ENCODE measurements at regions of chr2 and their contacts with region 1.

Region 1: GRCh38 chr2:44244129-44244871 is 31.0 kb upstream of the SLC3A1 start:
- DNase-seq: peak; percentile 68
- ATAC-seq: peak; percentile 75
- H3K4me3 ChIP-seq: no peak overlapping the region
- H3K27ac ChIP-seq: no peak overlapping the region
- H3K4me1 ChIP-seq: no peaks in the 10 kb centered on the region
- H3K27me3 ChIP-seq: no peaks in the 10 kb centered on the region; the same call in 1 of the 2 replicates
- CTCF ChIP-seq: peak; percentile 54
- POLR2A ChIP-seq: no peak
- RAD21 ChIP-seq: peak; percentile 50

Region 2: GRCh38 chr2:44044281-44044720 is 200.0 kb before region 1 on chr2:
- CTCF ChIA-PET with region 1: interaction called, 6 read pairs
- POLR2A ChIA-PET with region 1: no interaction called
- dilution Hi-C with region 1: no loop called
- in situ Hi-C with region 1: no loop called
- intact Hi-C with region 1: loop called (anchors 5 kb)
- DNase-seq: peak; percentile 74
- ATAC-seq: peak; percentile 100
- H3K4me3 ChIP-seq: no peak overlapping the region
- H3K27ac ChIP-seq: no peak overlapping the region
- H3K4me1 ChIP-seq: 0 out of 2 replicates have a peak, but pooled peaks cover 1% of the 10 kb centered on the region
- H3K27me3 ChIP-seq: peaks cover 25% of the 10 kb centered on the region
- CTCF ChIP-seq: peak; percentile 96
- POLR2A ChIP-seq: no peak
- RAD21 ChIP-seq: peak; percentile 93

Region 3: DNA sequence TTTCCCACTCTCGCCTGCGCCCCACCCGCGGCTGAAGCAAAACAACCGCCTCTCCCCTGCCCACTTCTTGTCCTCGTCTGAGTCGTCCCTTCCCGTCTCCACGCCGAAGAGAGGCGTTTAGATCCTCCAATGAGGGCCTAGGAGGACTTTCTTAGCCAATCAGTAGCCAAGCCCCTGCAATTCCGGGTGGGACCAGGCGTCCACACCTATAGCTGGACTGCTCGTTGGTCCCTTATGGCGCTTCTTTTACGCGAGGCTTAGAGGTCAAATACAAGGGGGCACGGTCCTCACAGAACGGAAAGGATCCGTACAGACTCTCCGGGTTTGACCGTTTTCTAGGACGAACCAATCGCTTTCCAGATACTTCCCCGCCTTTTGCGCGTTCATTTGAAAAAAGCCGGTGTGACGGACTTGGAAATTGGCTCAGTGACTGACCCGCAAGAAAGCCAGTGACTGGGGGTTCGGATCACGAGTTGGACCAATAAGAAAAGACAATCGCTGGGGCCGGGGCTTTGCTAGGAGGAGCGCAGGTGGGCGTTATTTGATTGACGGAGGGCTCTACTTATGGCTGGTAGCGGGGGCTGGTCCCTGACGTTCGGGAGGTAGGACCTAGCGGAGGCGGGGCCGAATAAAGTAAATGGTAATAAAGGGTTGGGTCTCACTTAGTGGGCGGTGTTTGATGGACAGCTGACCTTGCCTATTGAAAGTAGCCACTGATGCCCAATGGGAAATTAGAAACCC is 76.2 kb before region 1 on chr2:
- CTCF ChIA-PET with region 1: interaction called, 11 read pairs
- POLR2A ChIA-PET with region 1: no interaction called
- dilution Hi-C with region 1: no loop called
- in situ Hi-C with region 1: no loop called
- intact Hi-C with region 1: no loop called
- DNase-seq: peak; percentile 100
- ATAC-seq: peak; percentile 84
- H3K4me3 ChIP-seq: peak overlapping the region; percentile 69
- H3K27ac ChIP-seq: peak overlapping the region; percentile 76
- H3K4me1 ChIP-seq: peaks cover 2% of the 10 kb centered on the region; the same call in 1 of the 2 replicates
- H3K27me3 ChIP-seq: no peaks in the 10 kb centered on the region
- CTCF ChIP-seq: no peak
- POLR2A ChIP-seq: peak; percentile 51; the same call in 1 of the 2 replicates
- RAD21 ChIP-seq: no peak

Region 4: DNA sequence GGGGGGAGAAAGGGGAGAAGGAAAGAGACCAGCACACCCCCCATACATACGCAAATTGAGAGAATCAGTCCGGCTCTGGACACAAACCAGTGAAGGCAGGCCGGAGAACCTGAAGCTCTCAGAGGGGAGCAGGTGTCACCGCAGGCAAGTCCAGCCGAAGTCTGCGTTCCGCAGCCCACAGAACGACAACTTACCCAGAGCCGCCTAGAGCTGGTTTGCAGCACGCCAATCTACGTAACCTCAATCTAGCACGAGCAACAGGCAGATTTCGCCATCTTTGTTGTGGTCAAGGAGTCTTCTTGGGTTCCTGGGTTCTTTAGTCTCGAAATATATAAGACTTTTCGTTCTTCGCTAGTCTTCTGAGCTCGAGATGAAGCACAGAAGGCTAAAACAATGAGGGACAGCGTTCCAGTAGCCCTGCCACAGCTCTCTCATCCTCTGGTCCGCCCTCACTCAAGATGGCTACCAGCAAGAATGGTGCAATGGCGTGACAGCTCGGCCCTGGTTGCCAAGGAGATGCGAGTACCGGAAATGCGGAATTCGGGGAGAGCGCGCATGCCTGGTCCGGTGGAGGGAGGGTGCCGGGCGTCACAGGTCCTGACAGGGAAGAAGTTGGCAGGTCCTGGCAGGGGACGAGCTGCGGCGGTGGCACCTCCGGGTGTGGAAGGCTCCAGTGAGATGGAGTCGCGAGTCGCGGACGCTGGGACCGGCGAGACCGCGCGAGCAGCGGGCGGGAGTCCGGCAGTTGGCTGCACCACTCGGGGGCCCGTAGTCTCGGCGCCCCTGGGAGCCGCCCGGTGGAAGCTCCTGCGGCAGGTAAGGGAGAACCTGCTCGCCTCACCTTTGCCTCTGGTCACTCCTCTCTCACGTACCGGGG is 117.3 kb after region 1 on chr2 and contains the starts of genes CAMKMT and PREPL:
- CTCF ChIA-PET with region 1: interaction called, 4 read pairs
- POLR2A ChIA-PET with region 1: no interaction called
- dilution Hi-C with region 1: no loop called
- in situ Hi-C with region 1: no loop called
- intact Hi-C with region 1: loop called (anchors 1 kb)
- DNase-seq: peak; percentile 97
- ATAC-seq: peak; percentile 92
- H3K4me3 ChIP-seq: peak within 1 kb of the TSS; percentile 58
- H3K27ac ChIP-seq: peak within 1 kb of the TSS; percentile 98
- H3K4me1 ChIP-seq: no peaks in the 10 kb centered on the region
- H3K27me3 ChIP-seq: no peaks in the 10 kb centered on the region
- CTCF ChIP-seq: no peak
- POLR2A ChIP-seq: peak; percentile 86
- RAD21 ChIP-seq: no peak
- total RNA-seq, gene CAMKMT: 6.7 and 6.8 TPM in 2 replicates
- total RNA-seq, gene PREPL: 39.6 and 59.2 TPM in 2 replicates

Region 5: DNA sequence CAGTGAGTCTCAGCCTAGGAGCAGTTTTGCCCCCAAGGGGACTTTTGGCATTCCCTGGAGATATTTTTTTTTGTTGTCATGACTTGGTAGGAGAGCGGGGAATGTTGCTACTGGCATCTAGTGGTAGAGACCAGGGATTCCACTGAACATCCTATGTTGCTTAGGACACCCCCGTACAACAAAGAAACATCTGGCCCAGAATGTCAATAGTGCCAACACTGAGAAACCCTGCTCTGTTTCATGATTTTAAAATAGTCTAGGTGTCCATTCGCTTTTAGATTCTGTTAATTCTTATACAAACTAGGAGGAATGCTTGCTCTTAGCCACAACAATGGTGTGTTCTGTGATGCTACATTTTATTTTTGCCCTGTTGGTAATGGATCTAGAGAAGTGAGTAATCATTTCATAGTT is 471.4 kb after region 1 on chr2:
- CTCF ChIA-PET with region 1: no interaction called
- POLR2A ChIA-PET with region 1: no interaction called
- dilution Hi-C with region 1: no loop called
- in situ Hi-C with region 1: no loop called
- intact Hi-C with region 1: loop called (anchors 10 kb)
- DNase-seq: peak; percentile 27
- ATAC-seq: peak; percentile 67
- H3K4me3 ChIP-seq: no peak overlapping the region
- H3K27ac ChIP-seq: no peak overlapping the region
- H3K4me1 ChIP-seq: no peaks in the 10 kb centered on the region
- H3K27me3 ChIP-seq: no peaks in the 10 kb centered on the region
- CTCF ChIP-seq: peak; percentile 49
- POLR2A ChIP-seq: no peak
- RAD21 ChIP-seq: peak; percentile 51

Region 6: GRCh38 chr2:45882707-45883602 is 1638.7 kb after region 1 on chr2:
- CTCF ChIA-PET with region 1: no interaction called
- POLR2A ChIA-PET with region 1: no interaction called
- dilution Hi-C with region 1: no loop called
- in situ Hi-C with region 1: no loop called
- intact Hi-C with region 1: no loop called
- DNase-seq: no peak
- ATAC-seq: no peak
- H3K4me3 ChIP-seq: no peak overlapping the region
- H3K27ac ChIP-seq: no peak overlapping the region
- H3K4me1 ChIP-seq: peaks cover 7% of the 10 kb centered on the region
- H3K27me3 ChIP-seq: no peaks in the 10 kb centered on the region
- CTCF ChIP-seq: no peak
- POLR2A ChIP-seq: no peak
- RAD21 ChIP-seq: no peak